A673 (cell line): ENCODE measurements at regions of chr12 and their contacts with region 1.

Region 1: DNA sequence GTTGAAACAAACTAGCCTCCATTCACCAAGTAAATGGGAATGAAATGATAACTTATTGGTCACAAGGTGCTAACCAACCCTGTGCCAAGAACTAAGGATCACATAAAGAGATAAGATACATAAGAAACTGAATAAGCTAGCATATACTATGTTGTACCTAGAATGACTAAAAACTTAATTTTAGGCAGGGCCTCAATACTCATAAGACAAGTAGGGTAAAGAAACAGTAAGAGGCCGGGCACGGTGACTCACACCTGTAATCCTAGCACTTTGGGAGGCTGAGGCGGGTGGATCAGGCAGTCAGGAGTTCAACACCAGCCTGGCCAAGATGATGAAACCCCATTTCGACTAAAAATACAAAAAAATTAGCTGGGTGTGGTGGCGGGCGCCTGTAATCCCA is 17.7 kb downstream of the GDF11 start:
- DNase-seq: no peak
- H3K4me3 ChIP-seq: no peak overlapping the region
- H3K27ac ChIP-seq: no peak overlapping the region
- H3K4me1 ChIP-seq: no peaks in the 10 kb centered on the region
- H3K27me3 ChIP-seq: no peaks in the 10 kb centered on the region
- CTCF ChIP-seq: no peak

Region 2: DNA sequence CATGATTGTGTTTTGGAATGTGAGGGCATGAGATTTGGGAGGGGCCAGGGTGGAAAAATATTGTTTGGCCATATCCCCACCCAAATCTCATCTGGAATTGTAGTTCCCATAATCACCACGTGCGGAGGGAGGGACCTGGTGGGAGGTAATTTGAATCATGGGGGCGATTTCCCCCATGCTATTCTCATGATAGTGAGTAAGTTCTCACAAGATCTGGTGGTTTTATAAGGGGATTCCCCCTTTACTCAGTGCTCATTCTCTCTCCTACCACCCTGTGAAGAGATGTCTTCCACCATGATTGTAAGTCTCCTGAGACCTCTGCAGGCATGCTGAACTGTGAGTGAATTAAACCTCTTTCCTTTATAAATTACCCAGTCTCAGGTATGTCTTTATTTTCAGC is 108.3 kb before region 1 on chr12:
- CTCF ChIA-PET with region 1: no interaction called
- POLR2A ChIA-PET with region 1: no interaction called
- intact Hi-C with region 1: no loop called
- DNase-seq: no peak
- H3K4me3 ChIP-seq: no peak overlapping the region
- H3K27ac ChIP-seq: no peak overlapping the region
- H3K4me1 ChIP-seq: no peaks in the 10 kb centered on the region
- H3K27me3 ChIP-seq: no peaks in the 10 kb centered on the region
- CTCF ChIP-seq: no peak

Region 3: DNA sequence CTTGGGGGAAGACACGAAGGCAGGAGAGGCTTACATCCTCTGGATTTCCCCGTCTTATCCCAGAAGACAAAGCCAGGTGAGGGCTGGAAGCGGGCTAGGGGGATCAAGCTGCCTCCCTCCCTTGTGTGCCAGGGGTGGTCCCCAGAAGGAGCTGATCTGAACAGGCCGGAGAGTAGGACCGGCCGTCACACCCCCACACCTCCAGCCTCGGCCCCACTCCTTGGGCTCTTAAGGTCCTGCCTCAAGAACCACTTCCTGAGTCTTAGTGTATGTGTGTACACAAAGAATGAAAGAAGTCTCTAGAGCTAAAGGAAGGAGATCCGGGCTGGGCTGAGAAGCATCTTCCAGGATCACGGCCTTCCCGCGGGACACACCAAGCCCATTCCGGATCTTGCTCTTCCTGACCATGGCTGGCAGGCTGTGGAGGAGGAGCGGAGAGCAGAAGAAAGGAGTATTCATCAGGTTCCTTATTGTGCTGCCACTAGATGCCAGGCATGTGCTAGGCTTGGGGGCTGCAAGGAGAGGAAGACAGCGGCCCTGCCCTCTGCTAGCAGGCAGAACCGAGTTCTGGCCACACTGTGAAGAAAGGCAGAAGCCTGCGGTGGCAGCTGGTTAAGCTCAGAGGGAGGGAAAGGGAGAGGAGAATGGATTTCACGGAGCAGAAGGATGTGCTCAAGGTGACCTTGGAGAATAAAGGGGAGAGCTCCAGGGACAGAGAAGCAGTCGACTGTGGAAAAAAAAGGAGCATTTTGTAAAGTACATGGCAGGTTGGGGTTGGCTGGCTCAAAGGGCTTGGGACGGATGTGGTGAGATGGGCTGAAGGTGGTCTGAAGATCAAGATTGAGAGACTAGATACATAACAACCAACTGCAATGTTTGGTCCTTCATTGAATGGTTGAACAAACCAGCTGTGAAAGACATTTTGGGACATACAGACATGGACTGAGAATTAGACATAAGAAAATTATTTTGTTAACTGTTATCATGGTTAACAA is 30.5 kb before region 1 on chr12:
- CTCF ChIA-PET with region 1: interaction called, 12 read pairs
- POLR2A ChIA-PET with region 1: no interaction called
- intact Hi-C with region 1: no loop called
- DNase-seq: no peak
- H3K4me3 ChIP-seq: peak overlapping the region; percentile 85
- H3K27ac ChIP-seq: peak overlapping the region; percentile 92
- H3K4me1 ChIP-seq: peaks cover 12% of the 10 kb centered on the region
- H3K27me3 ChIP-seq: no peaks in the 10 kb centered on the region
- CTCF ChIP-seq: 0 out of 2 replicates have a peak, but pooled peaks have one; percentile 20